Posterior vena cava (tissue), 2 donors: ENCODE measurements at regions of chr20 and their contacts with region 1.

Region 1: GRCh38 chr20:46468509-46468908 is 44.9 kb downstream of the ZNF334 start:
- DNase-seq: no peak

Region 2: GRCh38 chr20:46446851-46447250 is 21.7 kb before region 1 on chr20:
- intact Hi-C with region 1: loop called in 1 of 2 experiments (anchors 1 kb)
- DNase-seq: no peak

Region 3: GRCh38 chr20:47191074-47191673 is 722.7 kb after region 1 on chr20:
- intact Hi-C with region 1: no loop called
- DNase-seq: no peak